Panc1 (cell line): ENCODE measurements at regions of chr2 and their contacts with region 1.

Region 1: DNA sequence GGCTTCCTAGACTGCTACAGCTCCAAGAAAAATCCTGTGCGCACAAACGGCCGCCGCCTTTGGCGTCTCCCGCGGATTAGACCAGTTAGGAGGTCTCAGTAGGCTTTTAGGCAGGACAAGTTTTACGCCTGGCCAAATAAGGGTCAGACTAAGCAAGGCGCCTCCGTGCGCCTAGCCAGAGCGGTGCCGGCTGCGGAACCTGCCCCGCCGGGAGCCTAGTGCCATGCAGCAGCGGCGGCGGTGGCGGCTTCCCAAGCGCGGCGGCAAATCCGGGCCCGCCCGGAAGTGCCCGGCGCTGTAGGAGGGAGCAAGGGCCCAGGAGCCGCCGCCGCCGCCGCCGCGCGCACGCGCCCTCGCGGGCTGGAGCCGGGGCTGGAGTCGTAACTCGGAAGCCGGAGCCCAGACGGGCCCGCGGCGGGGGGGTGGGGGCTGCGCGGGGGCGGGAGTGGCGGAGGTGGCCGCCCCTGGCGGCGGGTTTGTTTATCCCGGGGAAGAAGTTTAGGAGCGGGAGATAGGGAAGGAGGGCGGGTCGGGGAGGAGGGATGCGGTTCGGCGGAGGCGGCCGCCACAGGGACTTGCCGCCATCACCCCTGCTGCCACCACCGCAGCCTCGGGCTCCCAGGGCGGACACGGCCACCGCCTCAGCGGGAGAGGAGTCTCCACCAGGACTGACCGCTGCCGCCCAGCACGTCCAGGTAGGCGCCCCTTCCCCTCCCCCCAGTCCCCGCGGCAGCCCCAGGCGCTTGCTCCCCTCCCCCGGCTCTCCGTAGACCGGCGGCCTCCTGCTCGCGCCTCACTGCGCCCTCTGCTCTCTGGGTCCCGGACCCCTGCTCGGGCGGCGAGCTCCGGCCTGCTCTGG is at the start of gene SPOPL:
- DNase-seq: no peak
- ATAC-seq: peak; percentile 98
- H3K4me3 ChIP-seq: peak within 1 kb of the TSS; percentile 95 to 96
- H3K27ac ChIP-seq: peak within 1 kb of the TSS; percentile 98
- H3K4me1 ChIP-seq: peaks cover 32% of the 10 kb centered on the region
- H3K27me3 ChIP-seq: no peaks in the 10 kb centered on the region
- CTCF ChIP-seq: peak; percentile 35
- total RNA-seq, gene SPOPL: 21.8 TPM

Region 2: GRCh38 chr2:138779781-138780445 is 278.3 kb after region 1 on chr2 and contains the start of gene NXPH2:
- CTCF ChIA-PET with region 1: no interaction called
- POLR2A ChIA-PET with region 1: no interaction called
- in situ Hi-C with region 1: no loop called
- intact Hi-C with region 1: loop called (anchors 10 kb)
- DNase-seq: no peak
- ATAC-seq: peak; percentile 72
- H3K4me3 ChIP-seq: peak within 1 kb of the TSS; percentile 44 to 57
- H3K27ac ChIP-seq: peak within 1 kb of the TSS; percentile 86
- H3K4me1 ChIP-seq: peaks cover 28% of the 10 kb centered on the region
- H3K27me3 ChIP-seq: peaks cover 13% of the 10 kb centered on the region
- CTCF ChIP-seq: no peak
- total RNA-seq, gene NXPH2: 5.4 TPM